WTC11 (cell line): ENCODE measurements at regions of chr9 and their contacts with region 1.

Region 1: DNA sequence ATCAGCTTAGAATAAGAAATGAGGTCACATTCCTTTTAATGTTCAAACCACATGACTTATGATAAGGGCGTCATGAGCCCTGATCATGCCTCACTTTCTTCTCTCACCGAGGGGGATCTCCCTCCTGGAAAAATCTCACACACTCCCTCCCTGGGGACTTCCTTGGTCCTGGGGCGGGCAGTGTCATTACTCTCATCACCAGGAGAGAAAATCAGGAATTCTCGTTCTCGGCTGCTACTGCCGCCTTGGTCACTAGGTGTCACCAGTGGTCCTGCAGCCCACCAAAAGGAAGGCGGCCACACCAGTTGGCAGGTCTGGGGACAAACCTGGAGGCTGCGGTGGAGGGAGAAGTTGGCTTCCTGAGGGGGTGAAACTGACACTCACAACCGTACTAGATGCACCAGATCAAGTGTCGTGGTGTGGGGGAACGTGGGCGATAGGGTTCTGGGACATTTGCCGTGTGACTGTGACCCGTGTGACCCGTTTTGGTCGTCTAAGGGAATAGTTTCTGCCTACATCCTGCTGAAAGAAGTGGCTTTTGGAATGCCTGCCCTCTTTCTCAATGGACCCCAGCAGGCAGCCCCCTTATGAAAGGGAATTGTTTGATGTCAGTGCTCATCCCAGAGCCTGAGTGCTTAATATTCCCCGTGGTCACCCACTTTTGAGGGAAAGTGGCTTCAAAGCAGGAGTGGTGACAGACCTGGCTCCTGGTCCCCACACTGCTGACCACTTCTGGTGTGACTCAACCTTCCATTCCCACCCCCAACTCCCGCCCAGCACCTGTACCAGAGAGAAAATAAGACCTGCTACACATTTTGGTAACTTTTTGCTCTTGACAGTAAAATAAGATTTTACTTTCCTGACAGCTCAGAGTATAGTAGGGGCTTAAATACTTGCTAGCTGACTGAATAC is 63.2 kb downstream of the ACER2 start:
- DNase-seq: peak; percentile 80
- ATAC-seq: peak; percentile 96
- H3K4me3 Mint-ChIP-seq: no peak overlapping the region
- H3K27ac Mint-ChIP-seq: no peak overlapping the region
- H3K4me1 Mint-ChIP-seq: peaks cover 4% of the 10 kb centered on the region
- H3K27me3 Mint-ChIP-seq: no peaks in the 10 kb centered on the region; the same call in 1 of the 2 replicates
- CTCF ChIP-seq: peak; percentile 65

Region 2: DNA sequence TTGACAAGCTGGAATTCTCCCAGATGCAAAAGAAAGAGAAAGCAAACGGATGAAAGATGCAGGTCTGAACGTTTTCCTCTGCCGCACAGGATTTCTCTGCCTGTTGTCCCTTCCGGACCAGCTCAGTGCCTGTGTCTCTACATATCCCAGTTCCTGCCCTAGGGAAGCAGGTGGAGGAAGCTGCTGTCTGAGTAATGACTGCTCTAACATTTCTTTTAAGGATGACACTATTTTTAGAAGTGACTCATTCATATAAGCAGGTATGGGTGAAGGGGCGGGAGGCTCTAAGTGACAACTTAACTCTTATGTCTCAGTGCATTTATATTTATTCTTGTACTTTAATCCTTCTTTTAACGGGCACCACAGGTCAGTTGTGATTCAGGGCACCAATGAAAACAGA is 188.0 kb after region 1 on chr9:
- CTCF ChIA-PET with region 1: no interaction called
- POLR2A ChIA-PET with region 1: no interaction called
- DNase-seq: no peak
- ATAC-seq: no peak
- H3K4me3 Mint-ChIP-seq: no peak overlapping the region
- H3K27ac Mint-ChIP-seq: no peak overlapping the region
- H3K4me1 Mint-ChIP-seq: peaks cover 29% of the 10 kb centered on the region
- H3K27me3 Mint-ChIP-seq: no peaks in the 10 kb centered on the region
- CTCF ChIP-seq: no peak

Region 3: DNA sequence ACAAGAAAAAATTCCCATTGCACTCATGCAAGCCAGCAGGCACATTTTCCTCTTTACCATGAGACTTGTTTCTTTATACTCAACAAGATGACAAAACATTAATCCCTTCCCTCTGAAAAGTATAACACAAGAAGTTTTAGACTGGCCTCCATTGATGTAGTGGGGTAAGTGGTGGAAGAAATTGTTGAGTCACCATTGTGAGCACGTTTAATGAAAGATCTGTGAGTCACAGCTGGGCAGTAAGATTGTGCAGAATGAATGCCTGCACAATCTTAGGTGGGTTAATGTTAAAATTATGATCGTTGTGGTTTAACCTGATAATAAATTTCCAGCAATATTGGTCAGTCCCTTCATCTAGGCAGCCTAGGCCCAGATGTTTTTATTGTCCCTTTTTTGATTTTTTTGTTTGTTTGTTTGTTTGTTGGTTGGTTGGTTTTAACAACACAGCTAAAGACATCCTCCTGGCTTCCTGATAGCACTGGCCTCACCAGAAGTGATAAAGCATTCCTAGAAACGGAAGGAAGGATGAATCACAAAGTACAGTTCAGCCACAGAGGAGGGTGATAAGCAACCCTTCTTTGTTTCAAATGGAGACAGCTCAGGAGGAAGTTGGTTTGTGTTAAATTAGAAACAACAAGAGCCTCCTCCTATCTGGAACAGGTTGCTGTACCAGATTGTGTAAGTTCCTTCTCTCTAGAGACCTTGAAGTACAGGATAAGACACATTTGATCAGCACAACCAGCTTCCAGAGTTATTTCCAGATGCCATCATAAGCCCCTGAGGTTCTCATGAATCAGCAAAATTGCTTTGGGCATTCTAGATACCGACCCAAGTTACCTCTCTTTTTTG is 276.5 kb after region 1 on chr9:
- CTCF ChIA-PET with region 1: no interaction called
- POLR2A ChIA-PET with region 1: no interaction called
- DNase-seq: no peak
- ATAC-seq: peak; percentile 57
- H3K4me3 Mint-ChIP-seq: no peak overlapping the region
- H3K27ac Mint-ChIP-seq: peak overlapping the region; percentile 78; the same call in 1 of the 2 replicates
- H3K4me1 Mint-ChIP-seq: peaks cover 14% of the 10 kb centered on the region
- H3K27me3 Mint-ChIP-seq: no peaks in the 10 kb centered on the region
- CTCF ChIP-seq: no peak

Region 4: DNA sequence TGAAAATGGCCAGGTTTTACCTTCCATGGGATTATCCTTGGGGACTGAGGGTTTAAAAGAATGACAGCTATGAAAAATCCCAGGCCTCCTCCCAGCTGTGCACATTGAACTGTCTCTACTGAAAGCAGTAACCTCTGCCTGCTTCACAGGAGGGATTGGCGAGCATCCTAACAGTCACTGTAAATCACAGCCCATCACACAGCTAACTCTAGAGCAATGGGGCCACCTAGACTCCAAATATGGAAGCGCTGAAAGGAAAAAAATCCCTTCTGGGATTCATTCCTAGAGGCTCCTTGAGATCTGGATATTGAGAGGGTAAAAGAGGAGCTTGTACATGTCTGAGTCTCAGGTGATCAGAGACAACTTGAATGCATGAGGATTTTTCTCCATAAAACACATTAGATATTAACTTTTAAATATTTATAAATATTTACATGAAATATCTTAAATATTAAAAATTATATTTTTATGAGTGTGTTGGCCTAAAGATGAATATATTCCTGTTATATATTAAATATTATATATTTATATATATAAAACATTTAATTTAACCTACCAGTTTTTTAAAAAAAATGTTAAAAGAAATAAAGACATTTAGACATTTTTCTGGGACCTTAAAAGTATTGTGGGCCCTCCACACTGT is 450.6 kb after region 1 on chr9:
- CTCF ChIA-PET with region 1: interaction called, 13 read pairs
- POLR2A ChIA-PET with region 1: no interaction called
- DNase-seq: peak; percentile 44
- ATAC-seq: peak; percentile 77
- H3K4me3 Mint-ChIP-seq: no peak overlapping the region
- H3K27ac Mint-ChIP-seq: no peak overlapping the region
- H3K4me1 Mint-ChIP-seq: peaks cover 32% of the 10 kb centered on the region
- H3K27me3 Mint-ChIP-seq: peaks cover 6% of the 10 kb centered on the region
- CTCF ChIP-seq: peak; percentile 40; the same call in 1 of the 2 replicates